Spleen (tissue), 13 donors: ENCODE measurements at regions of chr7 and their contacts with region 1.

Region 1: GRCh38 chr7:24812310-24812945 is 55.2 kb upstream of the GSDME start:
- DNase-seq: peak; percentile 79
- H3K4me3 ChIP-seq: no peak overlapping the region
- H3K27ac ChIP-seq: no peak overlapping the region
- H3K4me1 ChIP-seq: no peaks in the 10 kb centered on the region
- H3K27me3 ChIP-seq: no peaks in the 10 kb centered on the region
- CTCF ChIP-seq: peak; percentile 44 to 88 (median 78)
- POLR2A ChIP-seq: no peak

Region 2: GRCh38 chr7:24722386-24723177 is 89.8 kb before region 1 on chr7:
- intact Hi-C with region 1: no loop called
- DNase-seq: peak; percentile 74
- H3K4me3 ChIP-seq: no peak overlapping the region
- H3K27ac ChIP-seq: no peak overlapping the region
- H3K4me1 ChIP-seq: peaks cover 0 to 57% (median 7%) of the 10 kb centered on the region in 6 donors
- H3K27me3 ChIP-seq: peaks cover 0 to 39% (median 0%) of the 10 kb centered on the region in 7 donors
- CTCF ChIP-seq: no peak
- POLR2A ChIP-seq: no peak

Region 3: GRCh38 chr7:24825931-24826661 is 13.7 kb after region 1 on chr7:
- intact Hi-C with region 1: no loop called
- DNase-seq: no peak
- H3K4me3 ChIP-seq: no peak overlapping the region
- H3K27ac ChIP-seq: peak overlapping the region in 3 of 8 donors; percentile 4 to 52 (median 43)
- H3K4me1 ChIP-seq: peaks cover 6 to 57% (median 27%) of the 10 kb centered on the region in 6 donors
- H3K27me3 ChIP-seq: no peaks in the 10 kb centered on the region
- CTCF ChIP-seq: no peak
- POLR2A ChIP-seq: no peak

Region 4: GRCh38 chr7:25093268-25093826 is 280.9 kb after region 1 on chr7:
- intact Hi-C with region 1: loop called (anchors 5 kb)
- DNase-seq: peak; percentile 91
- H3K4me3 ChIP-seq: no peak overlapping the region
- H3K27ac ChIP-seq: no peak overlapping the region
- H3K4me1 ChIP-seq: peaks cover 0 to 16% (median 4%) of the 10 kb centered on the region in 6 donors
- H3K27me3 ChIP-seq: no peaks in the 10 kb centered on the region
- CTCF ChIP-seq: peak; percentile 27 to 80 (median 65)
- POLR2A ChIP-seq: no peak